H1 (cell line): ENCODE measurements at regions of chr5 and their contacts with region 1.

Region 1: GRCh38 chr5:176573564-176574296 is 24.6 kb downstream of the CDHR2 start:
- DNase-seq: peak in 1 of 2 experiments; percentile 96
- H3K4me3 ChIP-seq: no peak overlapping the region
- H3K27ac ChIP-seq: no peak overlapping the region
- H3K4me1 ChIP-seq: peaks cover 0 to 2% (median under 1%) of the 10 kb centered on the region in 4 experiments; a peak in 2 of 7 replicates
- H3K27me3 ChIP-seq: peaks cover 0 to 2% (median 0%) of the 10 kb centered on the region in 4 experiments; a peak in 1 of 7 replicates
- CTCF ChIP-seq: peak in 2 of 3 experiments; percentile 88 to 90; a peak in 3 of 4 replicates
- EP300 ChIP-seq: no peak
- POLR2A ChIP-seq: no peak
- RAD21 ChIP-seq: peak; percentile 85

Region 2: GRCh38 chr5:176553262-176554077 is 20.3 kb before region 1 on chr5:
- CTCF ChIA-PET with region 1: interaction called, 16 read pairs
- POLR2A ChIA-PET with region 1: no interaction called
- DNase-seq: no peak
- H3K4me3 ChIP-seq: no peak overlapping the region
- H3K27ac ChIP-seq: no peak overlapping the region
- H3K4me1 ChIP-seq: peaks cover 0 to 11% (median 4%) of the 10 kb centered on the region in 4 experiments; a peak in 3 of 7 replicates
- H3K27me3 ChIP-seq: no peaks in the 10 kb centered on the region
- CTCF ChIP-seq: no peak
- EP300 ChIP-seq: no peak
- POLR2A ChIP-seq: no peak
- RAD21 ChIP-seq: no peak

Region 3: GRCh38 chr5:176596689-176597416 is 23.1 kb after region 1 on chr5:
- CTCF ChIA-PET with region 1: interaction called, 27 read pairs
- POLR2A ChIA-PET with region 1: interaction called, 4 read pairs
- DNase-seq: peak in 1 of 2 experiments; percentile 78
- H3K4me3 ChIP-seq: peak overlapping the region in 3 of 4 experiments; percentile 10 to 55 (median 21); a peak in 4 of 8 replicates
- H3K27ac ChIP-seq: no peak overlapping the region
- H3K4me1 ChIP-seq: 0 out of 7 replicates have a peak, but pooled peaks cover 0 to 2% (median 0%) of the 10 kb centered on the region in 4 experiments
- H3K27me3 ChIP-seq: peaks cover 0 to 19% (median 7%) of the 10 kb centered on the region in 4 experiments; a peak in 4 of 7 replicates
- CTCF ChIP-seq: peak in 2 of 3 experiments; percentile 54 to 75; a peak in 3 of 4 replicates
- EP300 ChIP-seq: no peak
- POLR2A ChIP-seq: no peak
- RAD21 ChIP-seq: peak in 1 of 2 experiments; percentile 33; a peak in 3 of 4 replicates

Region 4: DNA sequence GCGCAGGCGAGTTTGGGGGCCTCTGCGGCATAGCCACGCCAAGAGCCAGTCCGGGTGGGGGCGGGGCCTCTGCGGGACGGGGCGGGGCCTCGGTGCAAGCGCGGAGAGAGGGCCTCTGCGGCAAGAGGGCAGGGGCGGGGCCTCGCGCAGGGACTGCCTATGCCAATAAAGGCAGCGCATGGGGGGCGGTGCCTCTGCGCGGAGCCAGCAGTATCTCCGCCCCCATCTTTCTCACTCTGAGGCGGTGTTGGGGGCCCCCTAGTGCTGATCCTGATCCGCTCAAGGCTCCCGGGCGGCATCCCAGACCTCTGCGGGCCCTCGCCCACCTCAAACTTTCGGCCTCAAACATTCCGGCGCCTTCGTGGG is 45.5 kb after region 1 on chr5:
- CTCF ChIA-PET with region 1: interaction called, 13 read pairs
- POLR2A ChIA-PET with region 1: no interaction called
- DNase-seq: peak; percentile 86 to 94
- H3K4me3 ChIP-seq: peak overlapping the region in 3 of 4 experiments; percentile 11 to 54 (median 19); a peak in 4 of 8 replicates
- H3K27ac ChIP-seq: no peak overlapping the region
- H3K4me1 ChIP-seq: peaks cover 0 to 13% (median 6%) of the 10 kb centered on the region in 4 experiments; a peak in 6 of 7 replicates
- H3K27me3 ChIP-seq: peaks cover 9 to 47% (median 26%) of the 10 kb centered on the region in 4 experiments; a peak in 6 of 7 replicates
- CTCF ChIP-seq: peak in 2 of 3 experiments; percentile 61 to 70; a peak in 3 of 4 replicates
- EP300 ChIP-seq: no peak
- POLR2A ChIP-seq: no peak
- RAD21 ChIP-seq: peak; percentile 61 to 78

Region 5: DNA sequence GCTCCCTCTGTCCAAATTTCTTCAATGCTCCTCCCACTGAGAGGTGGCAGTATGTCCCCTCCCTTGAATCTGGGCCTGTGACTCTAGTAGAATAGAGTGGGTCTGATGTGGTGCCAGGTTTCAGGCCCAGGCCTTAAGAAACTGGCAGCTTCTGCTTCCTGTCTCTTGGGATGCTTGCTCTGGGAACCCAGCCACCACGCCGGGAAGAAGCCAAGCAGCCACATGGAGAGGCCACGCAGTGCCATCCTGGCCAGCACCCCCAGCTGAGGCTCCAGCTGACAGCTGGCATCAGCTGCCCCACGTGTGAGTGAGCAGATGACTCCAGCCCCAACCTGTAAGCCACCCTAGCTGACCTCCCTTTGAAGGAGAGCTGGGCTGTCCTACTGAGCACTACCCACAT is 66.3 kb after region 1 on chr5:
- CTCF ChIA-PET with region 1: interaction called, 10 read pairs
- POLR2A ChIA-PET with region 1: no interaction called
- DNase-seq: no peak
- H3K4me3 ChIP-seq: no peak overlapping the region
- H3K27ac ChIP-seq: no peak overlapping the region
- H3K4me1 ChIP-seq: peaks cover 0 to 21% (median 14%) of the 10 kb centered on the region in 4 experiments; a peak in 6 of 7 replicates
- H3K27me3 ChIP-seq: no peaks in the 10 kb centered on the region
- CTCF ChIP-seq: no peak
- EP300 ChIP-seq: no peak
- POLR2A ChIP-seq: no peak
- RAD21 ChIP-seq: no peak